GM13977 (cell line): ENCODE measurements at regions of chr15 and their contacts with region 1.

Region 1: DNA sequence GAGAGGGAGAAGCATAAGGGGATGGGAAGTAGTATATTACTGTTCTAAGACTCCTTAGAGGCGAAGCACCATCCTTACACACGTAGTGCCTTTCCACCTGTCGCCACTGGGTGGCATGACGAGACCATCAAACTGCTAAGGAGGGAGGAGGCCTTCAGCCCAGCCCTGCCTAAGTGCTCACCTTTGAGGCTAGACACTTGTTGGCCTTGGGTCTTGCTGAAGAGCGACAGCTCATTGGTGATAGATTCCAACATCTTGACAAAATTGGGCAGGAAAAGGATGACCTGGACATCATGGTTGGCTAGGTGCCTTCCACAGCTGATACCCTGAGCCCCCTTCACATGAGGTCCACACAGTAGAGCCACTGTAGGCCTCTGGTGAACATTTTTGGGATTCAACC is 19.6 kb downstream of the CLK3 start:
- DNase-seq: peak; percentile 76
- CTCF ChIP-seq: peak; percentile 92

Region 2: GRCh38 chr15:74265046-74265639 is 370.1 kb before region 1 on chr15:
- in situ Hi-C with region 1: no loop called
- DNase-seq: no peak
- CTCF ChIP-seq: no peak

Region 3: DNA sequence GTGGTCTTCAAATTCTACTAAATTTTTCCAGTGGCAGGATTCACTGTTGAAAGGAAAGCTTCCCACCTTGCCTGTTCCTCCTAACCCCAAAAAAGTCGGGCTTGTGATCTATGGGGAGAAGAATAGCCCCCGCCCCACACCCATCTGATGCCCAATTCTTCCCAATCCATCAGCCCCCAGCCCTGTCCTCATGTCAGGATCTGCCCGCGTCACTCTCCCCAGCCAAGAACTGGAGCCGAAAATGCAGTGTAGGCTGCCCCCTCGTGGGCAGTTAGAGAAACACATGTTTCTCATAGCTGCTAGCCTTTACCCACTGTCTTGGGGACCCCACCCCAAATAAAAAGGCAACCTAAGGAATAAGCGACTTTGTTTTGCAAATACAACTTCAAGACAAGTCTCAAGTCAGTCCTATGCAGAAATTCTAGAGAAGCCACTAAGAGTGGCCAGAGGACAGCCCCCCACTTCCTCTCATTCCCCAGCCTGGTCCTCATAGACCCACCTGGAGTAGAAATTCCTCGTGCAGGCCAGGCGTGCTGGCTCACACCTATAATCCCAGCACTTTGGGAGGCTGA is 133.6 kb after region 1 on chr15:
- in situ Hi-C with region 1: loop called (anchors 5 kb)
- DNase-seq: peak; percentile 85
- CTCF ChIP-seq: peak; percentile 82

Region 4: DNA sequence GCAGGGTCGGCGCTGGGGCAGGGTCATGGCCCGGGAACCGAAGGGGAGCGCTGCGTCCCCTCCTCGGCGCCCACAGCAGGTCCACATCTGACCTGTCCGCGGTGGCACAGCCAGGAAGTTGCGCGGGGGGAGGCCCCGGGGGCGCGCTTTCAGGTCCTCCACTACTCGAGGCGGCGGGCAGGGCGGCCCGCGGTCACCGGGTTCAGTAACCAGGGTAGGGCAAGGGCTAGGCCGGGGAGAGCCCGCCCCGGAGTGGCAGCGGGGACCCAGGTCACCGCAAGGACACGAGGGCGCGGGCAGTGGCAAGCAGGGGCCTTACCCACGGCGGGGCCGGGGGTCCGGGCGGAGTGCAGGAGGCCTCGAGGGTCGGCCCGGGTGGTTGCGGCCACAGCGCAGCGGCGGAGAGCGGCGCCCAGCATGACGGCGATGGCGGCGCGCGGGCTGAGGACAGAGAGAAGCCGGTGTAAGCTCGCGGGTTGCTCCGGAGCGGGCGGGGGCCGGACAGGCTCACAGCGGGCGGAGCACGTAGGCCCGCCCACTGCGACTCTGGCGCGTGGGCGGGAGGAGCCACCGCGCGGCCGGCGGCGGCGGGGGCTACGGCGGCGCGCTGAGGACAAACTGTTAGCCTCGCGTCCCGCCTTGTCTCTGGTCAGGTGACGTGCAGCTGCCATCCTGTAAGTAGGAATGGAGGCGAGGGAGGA is 302.5 kb after region 1 on chr15 and contains the start of gene COX5A:
- in situ Hi-C with region 1: loop called (anchors 25 kb)
- DNase-seq: peak; percentile 94
- CTCF ChIP-seq: peak; percentile 4